GM10248 (cell line): ENCODE measurements at regions of chr17 and their contacts with region 1.

Region 1: DNA sequence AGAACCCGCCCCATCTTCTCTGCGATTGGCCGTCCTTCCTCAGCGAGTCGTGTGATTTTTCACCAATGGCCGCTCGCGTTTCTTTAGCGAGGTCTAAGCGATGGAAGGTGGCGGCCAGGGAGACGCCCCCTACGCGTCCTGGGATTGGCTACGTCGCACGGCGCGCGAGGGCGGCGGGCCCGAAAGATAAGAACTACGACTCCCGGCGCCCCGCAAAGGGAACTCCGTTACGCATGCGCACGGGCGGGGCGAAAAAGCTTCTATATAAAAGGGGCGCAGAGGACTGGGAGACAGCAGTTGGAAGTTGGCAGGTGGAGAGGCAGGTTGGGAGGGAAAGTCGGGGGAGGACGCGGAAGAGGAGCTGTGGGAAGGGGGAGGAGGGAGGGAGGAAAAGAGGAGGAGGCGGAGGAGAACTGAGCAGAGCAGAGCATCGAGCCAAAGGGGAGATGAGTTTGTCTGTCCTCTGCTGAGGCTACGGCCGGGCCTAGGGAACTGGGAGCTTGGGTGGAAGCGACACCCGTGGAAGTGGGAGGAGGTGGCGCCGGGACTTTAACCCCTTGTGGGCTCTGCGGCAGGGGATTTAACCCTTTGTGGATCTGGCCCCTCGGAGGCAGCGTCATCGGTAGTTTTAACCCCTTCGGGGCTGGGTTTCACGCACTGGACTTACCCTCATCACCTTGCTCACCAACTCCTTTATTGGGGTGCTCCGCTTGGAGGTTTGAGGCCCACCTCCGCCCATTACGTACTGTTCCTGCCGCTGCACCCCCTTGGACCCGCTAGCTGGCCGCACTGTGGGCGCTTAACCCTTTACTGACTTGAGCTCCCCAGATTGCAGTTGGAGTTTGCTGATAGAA is at the start of gene HEXIM1:
- DNase-seq: peak; percentile 96
- CTCF ChIP-seq: no peak

Region 2: DNA sequence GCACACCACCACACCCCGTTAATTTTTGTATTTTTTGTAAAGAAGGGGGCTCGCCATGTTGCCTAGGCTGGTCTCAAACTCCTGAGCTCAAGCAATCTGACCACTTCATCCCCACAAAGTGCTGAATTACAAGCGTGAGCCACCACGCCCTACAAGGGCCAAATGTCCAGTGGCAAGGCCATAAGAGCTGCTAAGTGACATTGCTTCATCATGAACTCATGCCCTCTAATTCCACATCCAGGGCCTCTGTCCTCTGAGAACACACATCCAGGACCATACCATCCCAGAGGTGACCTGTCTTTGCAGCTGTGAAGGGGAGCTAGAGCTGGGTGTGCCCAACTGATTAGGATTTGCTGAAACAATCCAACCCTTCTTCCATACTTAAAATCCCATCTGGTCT is 517.7 kb before region 1 on chr17:
- CTCF ChIA-PET with region 1: no interaction called
- POLR2A ChIA-PET with region 1: interaction called, 10 read pairs
- DNase-seq: no peak
- CTCF ChIP-seq: no peak

Region 3: GRCh38 chr17:44919885-44920564 is 228.4 kb before region 1 on chr17:
- CTCF ChIA-PET with region 1: interaction called, 5 read pairs
- POLR2A ChIA-PET with region 1: interaction called, 11 read pairs
- DNase-seq: peak; percentile 90
- CTCF ChIP-seq: peak; percentile 92

Region 4: DNA sequence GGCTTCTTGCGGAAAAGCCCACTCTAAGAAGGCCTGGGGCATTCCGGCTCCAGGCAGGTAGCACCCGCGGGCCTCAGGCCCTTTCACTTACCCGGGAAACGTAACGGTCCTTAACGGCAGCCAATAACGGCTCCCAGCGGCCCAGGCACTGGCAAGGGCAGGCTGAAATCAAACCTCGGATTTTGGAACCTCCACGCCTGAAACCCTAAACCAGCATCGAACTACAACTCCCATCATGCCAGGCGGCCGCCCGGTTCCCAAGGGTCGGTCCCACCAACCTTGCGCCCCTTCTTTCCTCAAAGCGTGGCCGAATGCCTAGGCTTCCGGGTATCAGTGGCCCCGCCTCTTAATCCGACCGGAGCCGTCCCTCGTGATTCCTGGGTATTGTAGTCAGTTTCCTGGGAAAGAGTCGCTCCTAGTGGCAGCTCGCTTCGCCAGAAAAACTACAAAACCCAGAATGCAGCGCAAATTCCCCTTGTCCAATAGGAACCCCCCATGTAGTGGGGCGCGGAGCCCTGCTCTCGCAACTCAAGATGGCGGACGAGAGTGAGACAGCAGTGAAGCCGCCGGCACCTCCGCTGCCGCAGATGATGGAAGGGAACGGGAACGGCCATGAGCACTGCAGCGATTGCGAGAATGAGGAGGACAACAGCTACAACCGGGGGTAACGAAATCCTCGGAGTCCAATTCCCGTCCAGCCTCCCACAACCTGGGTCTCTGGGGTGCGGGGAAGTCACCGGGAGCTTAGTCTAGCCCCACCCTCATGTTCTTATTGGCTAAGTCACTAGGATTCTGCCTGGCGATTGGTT is 87.4 kb before region 1 on chr17 and contains the start of gene NMT1:
- CTCF ChIA-PET with region 1: interaction called, 3 read pairs
- POLR2A ChIA-PET with region 1: interaction called, 22 read pairs
- DNase-seq: peak; percentile 92
- CTCF ChIP-seq: no peak

Region 5: DNA sequence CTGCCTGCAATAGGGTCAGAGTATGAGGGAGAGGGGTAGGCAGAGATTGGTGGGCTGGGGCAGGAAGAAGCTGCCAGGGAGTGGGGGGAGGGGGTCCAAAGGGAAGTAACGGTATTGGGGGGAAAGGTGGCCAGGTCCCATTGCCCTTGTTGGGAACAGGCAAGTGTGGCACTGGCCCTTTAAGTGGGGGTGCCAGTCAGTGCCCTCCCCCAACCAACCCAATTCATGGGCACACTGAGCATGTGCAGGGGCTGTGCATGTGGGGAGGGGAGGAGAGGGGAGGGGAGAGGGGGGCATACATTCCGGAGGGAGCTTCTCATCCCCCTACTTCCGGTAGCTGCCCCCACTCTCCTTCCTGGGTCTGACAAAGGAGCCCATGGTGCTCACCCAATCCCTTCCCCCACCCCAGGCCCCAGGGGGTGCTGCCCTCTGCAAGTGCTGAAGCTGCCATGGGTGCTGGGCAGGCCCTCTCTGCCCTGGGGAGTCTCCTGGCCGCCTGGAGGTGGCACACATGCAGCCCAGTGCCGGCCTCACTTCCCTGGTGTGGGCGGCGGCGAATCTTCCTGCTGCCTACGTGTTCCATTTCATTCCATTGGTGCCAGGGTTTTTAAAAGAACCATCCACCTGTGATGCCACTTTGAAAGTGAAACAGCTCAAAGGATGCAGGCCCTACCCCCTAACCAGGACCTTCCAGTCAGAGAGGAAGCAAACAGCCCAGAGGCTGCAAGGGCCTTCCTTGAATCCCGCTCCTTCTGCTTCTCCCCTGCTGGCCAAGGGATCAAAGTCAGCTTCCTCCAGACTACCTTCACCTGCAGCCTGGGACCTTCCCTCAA is 24.3 kb after region 1 on chr17:
- CTCF ChIA-PET with region 1: interaction called, 9 read pairs
- POLR2A ChIA-PET with region 1: interaction called, 23 read pairs
- DNase-seq: peak; percentile 56
- CTCF ChIP-seq: no peak

Region 6: GRCh38 chr17:45197555-45198334 is 49.3 kb after region 1 on chr17:
- CTCF ChIA-PET with region 1: interaction called, 100 read pairs
- POLR2A ChIA-PET with region 1: interaction called, 17 read pairs
- DNase-seq: peak; percentile 92
- CTCF ChIP-seq: peak; percentile 94

Region 7: DNA sequence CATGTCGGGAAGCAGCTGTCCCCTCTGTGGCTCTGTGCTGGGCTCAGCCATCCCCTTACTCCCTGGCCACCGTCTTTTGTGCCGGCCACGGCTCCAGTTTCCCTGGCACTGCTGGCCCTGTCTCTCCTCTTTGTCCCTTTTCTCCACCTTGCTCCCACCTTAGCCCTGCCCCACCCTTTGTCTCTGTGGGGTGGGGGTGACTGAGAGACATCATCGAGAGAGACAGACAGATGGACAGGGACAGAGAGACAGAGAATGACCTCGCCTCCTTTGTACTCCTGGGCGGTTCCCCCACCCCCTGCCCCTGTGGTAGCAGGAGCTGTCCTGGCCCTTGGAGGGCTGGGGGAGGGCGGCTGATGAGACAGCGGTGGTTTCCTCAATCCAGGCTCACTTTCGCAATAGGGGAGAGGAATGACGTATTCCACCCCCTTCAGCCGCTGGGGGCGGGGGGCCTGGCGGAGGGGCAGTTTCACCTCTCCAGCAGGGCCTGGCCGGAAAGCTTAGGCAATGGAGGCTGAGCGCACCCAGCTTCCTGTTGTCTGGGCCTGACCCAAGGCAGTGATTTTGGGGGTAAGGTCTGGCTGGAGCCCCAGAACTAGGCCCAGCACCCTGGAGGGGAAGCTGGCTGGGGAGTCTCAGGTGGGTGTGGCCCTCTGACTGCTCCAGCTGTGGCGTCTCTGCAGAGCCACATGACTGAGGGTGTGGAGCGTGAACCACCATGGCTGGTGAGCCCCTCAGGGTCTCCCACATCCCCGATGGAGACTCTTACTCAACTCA is 80.5 kb after region 1 on chr17:
- CTCF ChIA-PET with region 1: interaction called, 3 read pairs
- POLR2A ChIA-PET with region 1: interaction called, 31 read pairs
- DNase-seq: peak; percentile 86
- CTCF ChIP-seq: no peak

Region 8: DNA sequence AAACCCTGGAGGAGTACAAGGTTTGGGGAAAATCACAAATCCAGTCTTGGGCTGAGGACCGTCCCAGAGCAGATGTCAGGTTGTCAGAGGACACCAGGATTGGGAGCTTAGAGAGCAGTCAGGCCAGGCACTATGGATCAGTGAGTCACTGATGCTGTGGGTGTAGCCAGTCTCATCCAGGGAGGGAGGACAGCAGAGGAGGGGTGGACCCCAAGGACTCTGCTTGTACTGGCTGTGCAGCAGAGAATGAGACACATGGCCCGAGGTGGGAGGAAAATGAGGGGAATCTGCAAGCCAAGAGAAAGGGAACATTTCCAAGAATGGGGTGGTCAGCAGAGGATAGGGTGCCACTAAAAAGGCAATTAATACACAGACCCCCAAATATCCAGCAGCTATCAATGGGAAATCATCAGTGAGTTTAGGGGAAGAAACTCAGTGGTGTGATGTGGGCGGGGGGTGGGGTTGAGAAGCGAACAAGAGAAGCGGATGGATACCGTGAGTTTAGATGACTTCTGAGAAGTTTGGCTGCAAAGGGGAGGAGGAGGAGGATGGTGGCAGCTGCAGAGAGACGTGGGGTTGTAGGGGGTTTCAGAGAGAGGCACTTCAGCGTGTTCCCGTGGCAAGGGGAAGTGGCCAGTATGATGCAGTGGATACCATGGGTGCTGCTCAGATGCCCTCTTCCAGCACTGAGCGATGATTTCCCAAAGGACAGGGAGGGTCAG is 240.4 kb after region 1 on chr17:
- CTCF ChIA-PET with region 1: no interaction called
- POLR2A ChIA-PET with region 1: no interaction called
- DNase-seq: no peak
- CTCF ChIP-seq: no peak